ENCODE measurements at regions of chr1 and their contacts with region 1.

Region 1: GRCh38 chr1:154736841-154737240 is 128.9 kb upstream of the ADAR start:
- DNase-seq: peak; percentile 80
- ATAC-seq: peak; percentile 97
- H3K4me3 Mint-ChIP-seq: peak overlapping the region; percentile 37
- H3K27ac Mint-ChIP-seq: peak overlapping the region; percentile 90
- H3K4me1 Mint-ChIP-seq: peaks cover 43% of the 10 kb centered on the region
- H3K27me3 Mint-ChIP-seq: no peaks in the 10 kb centered on the region

Region 2: DNA sequence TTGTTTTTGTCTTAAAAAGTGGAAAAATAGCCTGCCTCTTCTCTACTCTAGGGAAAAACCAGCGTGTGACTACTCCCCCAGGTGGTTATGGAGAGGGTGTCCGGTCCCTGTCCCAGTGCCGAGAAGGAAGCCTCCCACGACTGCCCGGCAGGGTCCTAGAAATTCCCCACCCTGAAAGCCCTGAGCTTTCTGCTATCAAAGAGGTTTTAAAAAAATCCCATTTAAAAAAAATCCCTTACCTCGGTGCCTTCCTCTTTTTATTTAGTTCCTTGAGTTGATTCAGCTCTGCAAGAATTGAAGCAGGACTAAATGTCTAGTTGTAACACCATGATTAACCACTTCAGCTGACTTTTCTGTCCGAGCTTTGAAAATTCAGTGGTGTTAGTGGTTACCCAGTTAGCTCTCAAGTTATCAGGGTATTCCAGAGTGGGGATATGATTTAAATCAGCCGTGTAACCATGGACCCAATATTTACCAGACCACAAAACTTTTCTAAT is 269.9 kb before region 1 on chr1:
- CTCF ChIA-PET with region 1: no interaction called
- POLR2A ChIA-PET with region 1: no interaction called
- intact Hi-C with region 1: no loop called
- DNase-seq: no peak
- ATAC-seq: no peak
- H3K4me3 Mint-ChIP-seq: peak overlapping the region; percentile 5
- H3K27ac Mint-ChIP-seq: peak overlapping the region; percentile 43
- H3K4me1 Mint-ChIP-seq: peaks cover 65% of the 10 kb centered on the region
- H3K27me3 Mint-ChIP-seq: no peaks in the 10 kb centered on the region

Region 3: GRCh38 chr1:154698320-154699096 is 38.3 kb before region 1 on chr1:
- CTCF ChIA-PET with region 1: no interaction called
- POLR2A ChIA-PET with region 1: interaction called, 3 read pairs
- intact Hi-C with region 1: loop called in 1 of 2 experiments (anchors 2 kb)
- DNase-seq: peak; percentile 44
- ATAC-seq: peak; percentile 96
- H3K4me3 Mint-ChIP-seq: no peak overlapping the region
- H3K27ac Mint-ChIP-seq: no peak overlapping the region
- H3K4me1 Mint-ChIP-seq: peaks cover 7% of the 10 kb centered on the region
- H3K27me3 Mint-ChIP-seq: peaks cover 1% of the 10 kb centered on the region

Region 4: GRCh38 chr1:154747740-154748404 is 11.0 kb after region 1 on chr1:
- CTCF ChIA-PET with region 1: interaction called, 14 read pairs
- POLR2A ChIA-PET with region 1: interaction called, 15 read pairs
- intact Hi-C with region 1: no loop called
- DNase-seq: peak; percentile 80
- ATAC-seq: peak; percentile 78
- H3K4me3 Mint-ChIP-seq: peak overlapping the region; percentile 80
- H3K27ac Mint-ChIP-seq: peak overlapping the region; percentile 98
- H3K4me1 Mint-ChIP-seq: peaks cover 80% of the 10 kb centered on the region
- H3K27me3 Mint-ChIP-seq: no peaks in the 10 kb centered on the region

Region 5: GRCh38 chr1:154784924-154785531 is 48.2 kb after region 1 on chr1:
- CTCF ChIA-PET with region 1: no interaction called
- POLR2A ChIA-PET with region 1: no interaction called
- intact Hi-C with region 1: loop called in 1 of 2 experiments (anchors 1 kb)
- DNase-seq: peak; percentile 77
- ATAC-seq: peak; percentile 98
- H3K4me3 Mint-ChIP-seq: peak overlapping the region; percentile 35
- H3K27ac Mint-ChIP-seq: peak overlapping the region; percentile 95
- H3K4me1 Mint-ChIP-seq: peaks cover 37% of the 10 kb centered on the region
- H3K27me3 Mint-ChIP-seq: no peaks in the 10 kb centered on the region

Measured in activated CD4-positive, alpha-beta T cell treated with anti-CD3 and anti-CD28 coated beads for 36 hours (primary cell).